Activated CD4-positive, alpha-beta T cell treated with anti-CD3 and anti-CD28 coated beads for 36 hours (primary cell): ENCODE measurements at regions of chrX and their contacts with region 1.

Region 1: DNA sequence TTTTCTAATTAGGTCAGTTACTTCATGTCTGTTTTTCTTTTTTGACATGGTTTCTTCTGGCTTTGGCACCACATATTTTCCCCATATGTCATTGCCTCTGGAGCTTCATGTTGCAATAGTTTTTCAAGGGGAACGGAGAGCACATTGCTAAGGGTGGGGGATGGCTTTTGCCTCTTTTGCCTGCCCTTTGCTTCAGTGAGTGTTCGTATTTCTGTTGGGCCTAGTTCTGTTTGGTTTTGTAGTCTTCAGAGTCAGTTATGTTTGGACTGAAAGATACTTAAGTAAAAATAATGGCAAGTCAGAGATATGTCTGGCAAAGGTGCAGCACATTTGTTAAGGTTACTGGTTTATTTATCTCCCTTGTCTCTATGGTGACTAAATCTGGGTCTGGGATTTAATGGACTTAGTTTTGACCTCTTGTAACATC is 29.1 kb downstream of the FHL1 start:
- DNase-seq: no peak
- ATAC-seq: no peak
- H3K4me3 Mint-ChIP-seq: no peak overlapping the region
- H3K27ac Mint-ChIP-seq: no peak overlapping the region
- H3K4me1 Mint-ChIP-seq: no peaks in the 10 kb centered on the region
- H3K27me3 Mint-ChIP-seq: no peaks in the 10 kb centered on the region

Region 2: DNA sequence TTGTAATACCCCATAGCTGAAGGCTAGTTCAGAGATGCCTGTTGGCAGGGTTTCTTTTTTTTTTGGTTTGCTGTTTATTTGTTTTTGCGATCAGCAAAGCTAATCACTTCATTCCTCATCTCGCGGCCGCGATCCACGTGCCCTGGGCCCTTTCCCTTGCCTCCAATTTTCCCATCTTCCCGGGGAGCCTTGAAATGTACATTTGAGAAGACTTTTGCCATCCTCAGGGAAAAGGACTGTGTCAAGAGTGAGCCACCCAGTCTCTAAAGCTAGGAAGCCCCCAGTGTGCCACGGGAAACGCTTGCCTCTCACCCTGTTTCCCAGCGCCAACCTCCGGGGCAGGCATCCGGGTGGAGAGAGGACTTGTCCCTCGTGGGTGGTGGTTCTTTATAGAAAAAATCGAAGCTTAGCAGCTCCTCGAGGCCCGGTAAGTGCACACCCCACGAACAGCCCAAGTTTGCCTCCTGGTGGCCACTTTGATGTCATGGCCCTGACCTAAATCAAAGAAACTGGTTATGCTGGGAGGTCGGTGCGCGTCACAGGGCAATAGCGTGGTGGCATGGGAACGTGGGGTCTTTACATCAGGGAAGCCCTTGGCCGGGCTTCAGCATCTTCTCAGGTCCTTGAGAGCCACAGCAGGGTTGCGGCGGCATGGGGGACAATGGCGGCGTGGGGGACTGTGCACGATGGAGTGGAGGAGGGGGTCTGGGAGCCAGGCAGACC is 32.8 kb after region 1 on chrX:
- CTCF ChIA-PET with region 1: no interaction called
- POLR2A ChIA-PET with region 1: no interaction called
- intact Hi-C with region 1: loop called in 1 of 2 experiments (anchors 1 kb)
- DNase-seq: peak; percentile 44
- ATAC-seq: peak; percentile 55
- H3K4me3 Mint-ChIP-seq: no peak overlapping the region
- H3K27ac Mint-ChIP-seq: no peak overlapping the region
- H3K4me1 Mint-ChIP-seq: peaks cover 13% of the 10 kb centered on the region
- H3K27me3 Mint-ChIP-seq: no peaks in the 10 kb centered on the region